ENCODE measurements at regions of chr19 and their contacts with region 1.

Region 1: DNA sequence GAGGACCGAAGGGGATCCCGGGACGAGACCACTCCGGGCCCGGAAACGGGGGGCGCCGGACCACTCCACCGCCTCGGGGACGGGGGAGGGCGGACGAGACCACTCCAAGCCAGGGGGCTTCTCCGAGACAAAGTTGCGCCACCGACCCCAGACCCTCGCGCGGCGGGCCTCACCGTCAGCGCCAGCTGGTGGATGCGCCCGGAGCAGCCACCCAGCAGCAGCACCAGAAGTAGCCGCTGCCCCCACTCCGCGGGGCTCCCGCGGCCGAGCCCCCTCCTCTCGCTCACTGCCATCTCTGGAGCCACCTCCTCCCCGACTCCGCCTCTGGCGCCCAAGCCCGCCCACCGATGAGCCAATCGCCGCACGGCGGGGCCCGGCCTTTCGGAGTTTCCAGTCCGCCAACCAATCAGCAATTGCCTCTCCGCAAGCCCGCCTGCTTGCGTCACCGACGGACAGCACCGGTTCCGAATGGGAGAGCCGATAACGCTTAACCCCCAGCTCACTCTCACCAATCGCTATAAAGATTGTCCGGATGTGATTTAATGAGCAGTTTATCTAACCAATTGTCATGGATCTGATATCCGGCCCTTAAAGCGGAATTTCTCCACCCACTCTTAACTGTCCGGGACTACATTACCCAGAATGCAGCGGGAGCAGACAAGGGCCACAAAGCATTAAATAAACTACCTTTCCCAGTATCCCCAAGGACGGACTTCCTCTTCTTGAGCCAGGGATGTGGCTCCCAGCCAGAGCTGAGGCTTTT is at the start of gene GPR108:
- DNase-seq: peak; percentile 100
- ATAC-seq: peak; percentile 92
- H3K4me3 ChIP-seq: peak within 1 kb of the TSS; percentile 59 to 62
- H3K27ac ChIP-seq: peak within 1 kb of the TSS; percentile 47 to 92
- H3K4me1 ChIP-seq: no peaks in the 10 kb centered on the region
- H3K27me3 ChIP-seq: no peaks in the 10 kb centered on the region
- total RNA-seq, gene GPR108: 49.2 to 70.2 TPM

Region 2: DNA sequence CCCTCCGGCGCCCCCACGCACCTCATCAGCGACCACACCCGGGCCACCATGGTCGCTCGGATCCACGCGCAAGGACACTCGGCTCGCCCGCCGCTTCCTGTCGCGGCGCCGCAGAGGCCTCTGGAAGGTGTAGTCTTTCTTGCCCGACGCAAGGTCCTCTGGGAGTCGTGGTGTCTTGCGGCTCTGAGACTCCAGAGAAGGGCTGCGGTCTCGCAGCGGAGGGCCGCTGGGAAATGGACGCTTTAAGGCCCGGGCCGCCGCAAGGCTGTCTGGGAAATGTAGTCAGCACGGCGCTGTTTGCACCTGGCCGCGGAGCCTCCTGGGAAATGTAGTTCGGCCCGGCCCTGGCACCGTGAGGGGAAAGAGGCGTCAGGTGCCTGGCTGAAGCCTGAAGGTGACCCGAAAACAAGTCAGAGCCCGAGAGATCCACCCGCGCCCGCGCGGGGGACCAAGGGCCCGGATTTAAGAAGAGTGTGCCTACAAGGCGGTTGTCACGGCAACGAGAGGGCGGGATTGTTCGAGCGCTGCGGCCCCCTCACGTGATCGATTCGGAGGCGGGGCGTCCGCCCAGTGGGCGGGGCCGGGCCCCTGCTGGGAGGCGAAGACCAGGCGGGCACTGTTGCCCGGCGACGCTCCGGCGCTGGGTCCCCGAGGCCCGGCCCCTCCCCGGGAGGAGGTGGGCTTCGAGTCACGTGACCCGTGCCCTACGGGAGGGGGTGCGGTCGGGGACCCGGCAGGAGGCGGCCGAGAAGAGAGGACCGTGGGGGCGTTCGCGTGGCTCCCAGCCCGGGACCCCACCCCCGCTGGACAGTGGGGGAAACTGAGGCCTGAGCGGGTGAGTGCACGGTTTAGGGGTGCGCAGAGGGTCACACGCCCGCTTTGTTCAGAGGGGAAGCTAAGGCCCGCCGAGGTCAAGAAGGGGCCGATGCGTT is 1056.8 kb before region 1 on chr19 and contains the starts of genes HSD11B1L and MICOS13:
- intact Hi-C with region 1: loop called in 1 of 2 experiments (anchors 5 kb)
- DNase-seq: peak; percentile 99
- ATAC-seq: peak; percentile 98
- H3K4me3 ChIP-seq: peak within 1 kb of the TSS; percentile 61 to 64
- H3K27ac ChIP-seq: peak within 1 kb of the TSS in 1 of 2 donors; percentile 60
- H3K4me1 ChIP-seq: no peaks in the 10 kb centered on the region
- H3K27me3 ChIP-seq: no peaks in the 10 kb centered on the region
- total RNA-seq, gene HSD11B1L: 3.9 to 5.7 TPM
- total RNA-seq, gene MICOS13: 35.4 to 39.0 TPM

Region 3: DNA sequence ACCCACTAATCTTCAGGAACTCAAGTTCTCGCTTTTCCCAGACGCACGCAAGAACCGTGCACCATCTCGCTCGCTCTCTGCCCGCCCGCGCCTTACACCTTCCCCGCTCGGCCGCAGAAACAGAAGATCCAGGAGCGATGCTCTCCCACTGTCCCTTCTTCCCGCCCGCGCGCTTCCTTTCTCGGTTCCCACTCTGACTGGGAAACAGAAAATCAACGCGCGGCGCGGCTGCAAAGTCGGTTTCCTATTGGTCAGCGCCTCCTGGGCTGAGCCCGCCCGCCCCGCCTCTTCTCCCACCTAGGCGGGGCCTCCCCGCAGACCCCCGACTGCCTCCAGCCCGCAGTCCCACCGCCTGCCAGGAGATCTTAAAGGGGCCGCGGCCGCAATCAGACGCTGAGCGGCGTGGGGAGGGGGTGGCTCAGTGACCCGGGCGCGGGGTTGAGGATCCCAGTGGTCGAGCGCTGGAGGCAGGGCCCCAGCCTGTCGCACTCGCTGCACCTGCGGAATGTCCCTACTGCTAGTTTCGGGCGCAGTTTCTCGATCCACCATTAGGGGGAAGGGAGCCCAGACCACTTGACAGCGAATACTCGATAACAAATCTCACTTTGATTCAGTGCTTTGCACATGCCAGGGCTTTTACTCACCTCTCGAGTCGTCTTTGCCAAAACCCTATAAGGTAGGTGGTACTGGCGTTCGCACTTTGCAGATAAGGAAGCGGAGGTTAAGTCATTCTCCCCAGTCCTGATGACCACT is 277.2 kb before region 1 on chr19:
- intact Hi-C with region 1: loop called in 1 of 2 experiments (anchors 5 kb)
- DNase-seq: peak; percentile 98 to 99
- ATAC-seq: peak; percentile 97
- H3K4me3 ChIP-seq: peak overlapping the region; percentile 78 to 86
- H3K27ac ChIP-seq: peak overlapping the region in 1 of 2 donors; percentile 41
- H3K4me1 ChIP-seq: no peaks in the 10 kb centered on the region
- H3K27me3 ChIP-seq: no peaks in the 10 kb centered on the region

Region 4: DNA sequence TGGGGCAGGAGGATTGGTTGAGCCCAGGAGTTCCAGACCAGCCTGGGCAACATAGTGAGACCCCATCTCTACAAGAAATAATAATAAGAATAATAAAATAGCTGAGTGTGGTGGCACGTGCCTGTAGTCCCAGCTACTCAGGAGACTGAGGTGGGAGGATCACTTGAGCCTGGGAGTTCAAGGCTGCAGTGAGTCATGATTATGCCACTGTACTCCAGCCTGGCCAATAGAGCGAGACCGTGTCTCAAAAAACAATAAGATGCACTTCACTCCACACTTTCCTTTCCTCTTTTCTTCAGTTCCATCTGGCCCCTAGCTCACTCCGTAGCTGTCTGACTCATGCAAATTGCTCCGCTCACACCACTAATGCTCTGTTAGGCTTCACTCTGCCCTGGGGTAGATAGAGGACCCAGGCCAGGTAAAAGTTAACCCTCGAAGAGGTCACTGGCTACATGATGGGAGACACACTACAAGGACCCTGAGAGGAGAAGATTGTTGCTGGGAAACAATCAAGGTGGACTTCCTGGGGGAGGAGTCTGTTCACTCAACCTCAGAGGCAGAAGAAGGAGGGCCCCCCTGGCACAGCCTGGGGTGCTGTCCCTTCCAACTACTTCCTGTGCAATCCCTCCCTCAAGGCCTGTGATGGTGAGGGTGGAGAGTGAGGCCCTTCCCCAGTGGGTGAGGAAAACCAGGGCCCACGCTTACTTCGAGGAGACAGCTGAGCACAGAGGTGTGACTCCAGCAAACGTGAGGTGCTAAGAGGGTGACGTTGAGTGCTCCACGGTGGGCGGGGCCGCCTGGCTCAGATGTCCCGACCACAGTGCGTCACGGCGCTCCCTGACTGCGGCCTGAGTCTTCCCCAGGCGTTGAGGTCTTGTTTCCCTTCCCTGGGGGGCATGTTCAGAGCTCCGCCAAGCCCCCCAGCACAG is 215.5 kb before region 1 on chr19:
- intact Hi-C with region 1: loop called in 1 of 2 experiments (anchors 10 kb)
- DNase-seq: no peak
- ATAC-seq: no peak
- H3K4me3 ChIP-seq: no peak overlapping the region
- H3K27ac ChIP-seq: no peak overlapping the region
- H3K4me1 ChIP-seq: no peaks in the 10 kb centered on the region
- H3K27me3 ChIP-seq: no peaks in the 10 kb centered on the region

Region 5: GRCh38 chr19:6632002-6632621 is 105.4 kb before region 1 on chr19:
- intact Hi-C with region 1: loop called in 1 of 2 experiments (anchors 10 kb)
- DNase-seq: no peak
- ATAC-seq: peak; percentile 79
- H3K4me3 ChIP-seq: no peak overlapping the region
- H3K27ac ChIP-seq: no peak overlapping the region
- H3K4me1 ChIP-seq: no peaks in the 10 kb centered on the region
- H3K27me3 ChIP-seq: no peaks in the 10 kb centered on the region

Region 6: GRCh38 chr19:6862673-6863078 is 125.2 kb after region 1 on chr19:
- intact Hi-C with region 1: loop called in 1 of 2 experiments (anchors 2 kb)
- DNase-seq: peak; percentile 89 to 92
- ATAC-seq: peak; percentile 93
- H3K4me3 ChIP-seq: no peak overlapping the region
- H3K27ac ChIP-seq: no peak overlapping the region
- H3K4me1 ChIP-seq: no peaks in the 10 kb centered on the region
- H3K27me3 ChIP-seq: no peaks in the 10 kb centered on the region

Measured in aorta (tissue), 5 donors.